HAP-1 (cell line): ENCODE measurements at regions of chr1 and their contacts with region 1.

Region 1: GRCh38 chr1:149899460-149900293 is at the start of gene BOLA1:
- DNase-seq: no peak
- H3K4me3 ChIP-seq: no peak within 1 kb of the TSS
- H3K4me1 ChIP-seq: no peaks in the 10 kb centered on the region
- H3K27me3 ChIP-seq: no peaks in the 10 kb centered on the region

Region 2: DNA sequence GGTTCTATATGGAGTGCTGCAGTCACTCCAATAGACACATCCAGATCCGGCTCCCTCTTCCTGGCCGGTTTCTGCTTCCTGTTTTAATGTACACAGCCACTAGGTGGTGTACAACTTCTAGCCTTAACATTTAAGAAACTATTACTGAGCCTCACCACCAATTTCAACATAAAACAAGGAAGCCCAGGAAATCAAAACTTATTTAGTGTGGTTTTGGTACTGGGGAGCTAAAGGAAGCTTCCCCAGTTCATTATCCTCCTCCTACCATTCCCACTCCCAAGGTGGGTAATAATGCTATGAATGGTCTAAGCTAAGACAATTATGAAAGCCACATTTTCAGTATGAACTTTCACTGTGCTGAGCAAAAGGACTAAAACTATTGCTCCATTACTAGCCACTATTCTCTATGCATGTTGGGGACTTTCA is 62.5 kb after region 1 on chr1:
- in situ Hi-C with region 1: no loop called
- DNase-seq: peak; percentile 54 to 55
- H3K4me3 ChIP-seq: no peak overlapping the region
- H3K4me1 ChIP-seq: no peaks in the 10 kb centered on the region
- H3K27me3 ChIP-seq: no peaks in the 10 kb centered on the region

Region 3: DNA sequence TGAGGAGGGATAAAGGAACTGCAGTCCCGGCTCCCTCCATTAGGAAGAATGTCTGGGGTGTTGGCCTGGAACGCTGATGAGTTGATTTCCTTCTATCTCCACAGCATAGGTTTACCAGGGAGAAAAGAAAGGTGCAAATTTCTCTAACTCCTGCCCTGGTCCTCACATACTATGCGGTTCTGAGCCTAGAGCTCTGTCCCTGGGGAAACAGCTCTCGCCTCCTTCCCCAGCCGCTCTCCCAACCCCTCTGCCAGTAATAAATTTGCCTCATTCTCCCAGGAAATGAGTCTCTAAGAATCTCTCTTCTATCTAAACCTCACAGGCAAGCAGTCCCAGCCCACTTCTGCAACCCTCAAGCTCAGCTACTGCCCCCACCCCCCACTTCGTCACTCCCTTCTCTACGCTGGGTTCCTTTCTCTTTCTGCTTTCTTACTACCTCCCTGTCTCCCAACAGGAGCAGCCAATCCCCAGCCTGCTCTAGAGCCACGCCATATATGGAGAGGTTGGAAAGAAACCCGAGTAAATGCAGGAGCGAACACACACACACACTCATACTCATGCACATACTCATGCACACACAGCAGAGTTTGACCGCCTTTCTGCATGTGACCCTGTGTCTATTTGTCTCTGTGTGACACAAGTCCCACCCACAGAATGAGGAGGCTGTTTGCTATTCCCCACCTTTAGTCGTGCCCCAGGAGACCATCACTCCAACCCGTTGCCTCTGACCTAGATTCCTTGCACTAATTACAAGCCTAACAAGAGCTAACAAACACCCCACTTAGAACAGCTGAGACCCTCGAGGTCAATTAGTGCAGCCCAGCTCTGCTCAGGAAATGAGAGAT is 263.4 kb after region 1 on chr1:
- in situ Hi-C with region 1: loop called (anchors 25 kb)
- DNase-seq: peak; percentile 93 to 97
- H3K4me3 ChIP-seq: peak overlapping the region; percentile 7; the same call in 1 of the 2 replicates
- H3K4me1 ChIP-seq: peaks cover 16% of the 10 kb centered on the region
- H3K27me3 ChIP-seq: no peaks in the 10 kb centered on the region